Activated CD8-positive, alpha-beta T cell treated with anti-CD3 and anti-CD28 coated beads for 36 hours (primary cell): ENCODE measurements at regions of chr21 and their contacts with region 1.

Region 1: DNA sequence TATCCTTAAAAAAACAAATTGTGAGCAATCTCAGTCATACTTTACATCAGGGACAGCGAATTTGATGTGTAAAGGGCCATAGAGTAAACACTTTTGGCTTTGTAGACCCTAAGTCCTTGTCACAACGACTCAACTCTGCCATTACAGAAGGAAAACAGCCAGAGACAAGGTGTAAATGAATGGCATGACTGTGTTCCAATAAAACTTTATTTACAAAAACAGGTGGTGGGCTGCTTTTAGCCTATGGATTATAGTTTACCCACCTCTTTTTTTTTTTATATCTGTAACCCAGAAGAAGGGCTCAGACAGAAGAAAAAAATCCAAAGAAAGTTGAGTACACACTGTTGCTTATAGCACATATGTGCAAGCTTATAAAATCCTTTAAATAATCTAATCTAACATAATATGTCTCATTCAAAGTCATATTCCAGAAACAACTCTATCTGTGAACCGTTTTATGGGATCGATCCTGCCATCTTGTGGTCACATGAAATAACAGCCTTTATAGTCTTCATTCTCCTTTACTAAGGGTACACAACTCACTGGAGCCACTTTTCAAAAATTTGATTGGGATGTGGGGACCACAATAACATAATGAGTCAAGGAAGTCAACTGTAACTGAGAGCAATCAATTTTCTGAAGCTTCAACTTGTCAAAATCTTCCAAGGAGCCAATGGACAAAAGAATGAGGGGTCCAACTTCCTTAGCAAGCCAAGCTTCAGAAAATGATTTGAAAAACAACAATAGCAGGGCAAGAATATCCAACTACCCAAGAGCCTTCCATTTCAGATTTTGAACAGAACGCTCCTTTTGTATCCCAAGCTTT is 142.2 kb upstream of the KRTAP19-8 start:
- DNase-seq: peak; percentile 35
- ATAC-seq: no peak
- H3K4me3 Mint-ChIP-seq: peak overlapping the region; percentile 84
- H3K27ac Mint-ChIP-seq: peak overlapping the region; percentile 94
- H3K4me1 Mint-ChIP-seq: peaks cover 74% of the 10 kb centered on the region
- H3K27me3 Mint-ChIP-seq: no peaks in the 10 kb centered on the region
- CTCF ChIP-seq: peak; percentile 72

Region 2: DNA sequence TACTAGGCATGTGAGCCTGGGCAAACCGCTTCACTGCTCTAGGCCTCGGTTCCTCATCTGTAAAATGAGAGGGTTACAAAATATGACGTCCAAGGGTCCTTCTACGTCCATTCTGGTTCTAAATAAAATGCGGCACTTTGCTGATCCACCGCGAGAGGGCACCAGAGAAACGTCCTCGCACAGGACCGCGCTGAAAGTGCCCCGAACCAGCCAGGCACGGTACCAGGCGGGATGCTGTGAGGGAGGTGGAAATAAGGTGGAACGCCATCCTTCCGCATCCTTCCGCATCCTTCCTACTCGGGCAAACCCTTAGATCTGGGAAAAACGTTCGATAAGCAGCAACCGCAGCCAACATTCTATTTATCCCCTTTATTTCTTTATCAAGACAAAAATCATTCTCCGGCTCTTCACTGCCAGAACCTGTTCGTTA is 81.9 kb before region 1 on chr21:
- CTCF ChIA-PET with region 1: interaction called, 79 read pairs
- POLR2A ChIA-PET with region 1: interaction called, 3 read pairs
- intact Hi-C with region 1: loop called (anchors 2 kb)
- DNase-seq: peak; percentile 84
- ATAC-seq: peak; percentile 87
- H3K4me3 Mint-ChIP-seq: no peak overlapping the region
- H3K27ac Mint-ChIP-seq: no peak overlapping the region
- H3K4me1 Mint-ChIP-seq: peaks cover 18% of the 10 kb centered on the region
- H3K27me3 Mint-ChIP-seq: peaks cover 2% of the 10 kb centered on the region
- CTCF ChIP-seq: peak; percentile 92

Region 3: DNA sequence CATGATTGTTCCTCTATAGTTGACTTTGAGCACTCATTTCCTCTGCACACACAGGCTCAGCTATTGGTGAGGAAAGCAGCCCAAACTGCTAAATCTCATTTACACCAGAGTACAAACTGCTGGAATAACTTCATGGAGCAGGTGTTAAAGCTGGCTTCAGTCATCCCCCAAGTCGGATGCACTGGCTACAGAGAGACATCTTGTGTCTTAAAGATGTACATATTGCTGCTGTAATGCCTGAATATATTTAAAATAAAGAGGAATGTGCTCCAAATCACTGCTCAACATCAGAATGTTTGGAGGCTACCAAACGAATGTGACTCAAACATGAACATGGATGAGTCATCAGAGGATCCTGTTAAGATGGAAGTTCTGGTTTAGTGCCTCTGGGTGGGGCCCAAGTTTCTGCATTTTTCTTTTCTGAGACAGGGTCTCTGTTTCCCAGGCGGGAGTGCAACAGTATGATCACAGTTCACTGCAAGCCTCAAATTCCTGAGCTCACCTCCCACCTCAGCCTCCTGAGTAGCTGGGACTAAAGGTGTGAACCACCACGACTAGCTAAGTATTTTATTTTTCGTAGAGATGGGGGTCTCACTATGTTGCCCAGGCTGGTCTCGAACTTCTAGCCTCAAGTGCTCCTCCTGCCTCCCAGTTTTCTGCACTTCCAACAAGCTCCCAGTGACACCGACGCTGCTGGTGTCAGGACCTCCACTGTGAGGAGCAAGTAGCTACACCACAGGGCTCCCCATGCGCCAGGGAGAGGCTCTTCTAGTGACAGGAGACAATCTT is 63.1 kb before region 1 on chr21:
- CTCF ChIA-PET with region 1: interaction called, 12 read pairs
- POLR2A ChIA-PET with region 1: interaction called, 3 read pairs
- intact Hi-C with region 1: no loop called
- DNase-seq: no peak
- ATAC-seq: peak; percentile 73
- H3K4me3 Mint-ChIP-seq: no peak overlapping the region
- H3K27ac Mint-ChIP-seq: no peak overlapping the region
- H3K4me1 Mint-ChIP-seq: peaks cover 8% of the 10 kb centered on the region
- H3K27me3 Mint-ChIP-seq: no peaks in the 10 kb centered on the region
- CTCF ChIP-seq: peak; percentile 44

Region 4: DNA sequence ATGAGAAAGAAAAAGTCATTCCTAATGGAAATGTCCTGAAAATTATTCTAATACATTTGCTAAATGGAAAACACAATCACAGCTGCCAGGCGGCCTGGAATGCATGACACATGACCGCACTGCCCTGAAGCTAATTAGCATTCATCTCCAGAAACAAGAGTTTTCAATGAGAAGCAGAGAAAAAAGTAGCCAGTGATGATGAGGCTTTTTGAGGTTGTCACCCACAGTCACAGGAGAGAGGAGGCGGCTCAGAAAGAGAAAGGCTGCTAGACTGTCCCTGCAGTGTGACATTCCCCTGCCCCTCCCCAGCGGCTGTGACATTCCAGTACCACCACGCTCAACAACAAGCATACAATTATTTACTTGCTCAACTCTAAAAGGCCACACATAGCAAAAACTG is 19.3 kb before region 1 on chr21:
- CTCF ChIA-PET with region 1: interaction called, 22 read pairs
- POLR2A ChIA-PET with region 1: interaction called, 19 read pairs
- intact Hi-C with region 1: no loop called
- DNase-seq: peak; percentile 31
- ATAC-seq: peak; percentile 49
- H3K4me3 Mint-ChIP-seq: no peak overlapping the region
- H3K27ac Mint-ChIP-seq: peak overlapping the region; percentile 36
- H3K4me1 Mint-ChIP-seq: peaks cover 75% of the 10 kb centered on the region
- H3K27me3 Mint-ChIP-seq: no peaks in the 10 kb centered on the region
- CTCF ChIP-seq: no peak

Region 5: GRCh38 chr21:31198575-31198974 is 18.1 kb after region 1 on chr21:
- CTCF ChIA-PET with region 1: interaction called, 20 read pairs
- POLR2A ChIA-PET with region 1: interaction called, 27 read pairs
- intact Hi-C with region 1: no loop called
- DNase-seq: no peak
- ATAC-seq: peak; percentile 58
- H3K4me3 Mint-ChIP-seq: no peak overlapping the region
- H3K27ac Mint-ChIP-seq: no peak overlapping the region
- H3K4me1 Mint-ChIP-seq: peaks cover 48% of the 10 kb centered on the region
- H3K27me3 Mint-ChIP-seq: no peaks in the 10 kb centered on the region
- CTCF ChIP-seq: peak; percentile 73

Region 6: DNA sequence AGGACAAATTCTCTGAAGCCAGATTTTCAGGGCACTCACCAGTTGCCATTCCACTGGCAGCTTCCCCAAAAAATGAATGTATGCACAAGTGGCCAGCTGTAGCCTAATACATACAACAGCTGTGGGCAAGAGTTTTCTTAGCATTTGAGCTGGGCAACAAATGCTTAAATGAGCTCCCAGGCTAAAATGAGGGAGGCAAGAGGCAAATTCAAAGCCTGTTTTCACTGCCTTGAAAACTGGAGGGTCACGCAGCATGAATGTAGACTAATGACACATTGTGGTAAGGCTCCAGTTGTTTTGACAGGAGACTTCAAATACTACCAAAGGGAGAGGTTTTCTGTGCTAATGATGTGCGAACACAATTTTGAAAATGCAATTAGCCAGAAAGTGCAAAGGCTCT is 75.4 kb after region 1 on chr21:
- CTCF ChIA-PET with region 1: no interaction called
- POLR2A ChIA-PET with region 1: no interaction called
- intact Hi-C with region 1: no loop called
- DNase-seq: no peak
- ATAC-seq: no peak
- H3K4me3 Mint-ChIP-seq: no peak overlapping the region
- H3K27ac Mint-ChIP-seq: no peak overlapping the region
- H3K4me1 Mint-ChIP-seq: peaks cover 2% of the 10 kb centered on the region
- H3K27me3 Mint-ChIP-seq: no peaks in the 10 kb centered on the region
- CTCF ChIP-seq: no peak